Right cardiac atrium (tissue), 5 donors: ENCODE measurements at regions of chr13 and their contacts with region 1.

Region 1: GRCh38 chr13:94228763-94229162 is 250.7 kb downstream of the DCT start:
- DNase-seq: no peak
- ATAC-seq: peak; percentile 16 to 76
- H3K4me3 ChIP-seq: no peak overlapping the region
- H3K27ac ChIP-seq: no peak overlapping the region
- H3K4me1 ChIP-seq: no peaks in the 10 kb centered on the region
- H3K27me3 ChIP-seq: no peaks in the 10 kb centered on the region

Region 2: DNA sequence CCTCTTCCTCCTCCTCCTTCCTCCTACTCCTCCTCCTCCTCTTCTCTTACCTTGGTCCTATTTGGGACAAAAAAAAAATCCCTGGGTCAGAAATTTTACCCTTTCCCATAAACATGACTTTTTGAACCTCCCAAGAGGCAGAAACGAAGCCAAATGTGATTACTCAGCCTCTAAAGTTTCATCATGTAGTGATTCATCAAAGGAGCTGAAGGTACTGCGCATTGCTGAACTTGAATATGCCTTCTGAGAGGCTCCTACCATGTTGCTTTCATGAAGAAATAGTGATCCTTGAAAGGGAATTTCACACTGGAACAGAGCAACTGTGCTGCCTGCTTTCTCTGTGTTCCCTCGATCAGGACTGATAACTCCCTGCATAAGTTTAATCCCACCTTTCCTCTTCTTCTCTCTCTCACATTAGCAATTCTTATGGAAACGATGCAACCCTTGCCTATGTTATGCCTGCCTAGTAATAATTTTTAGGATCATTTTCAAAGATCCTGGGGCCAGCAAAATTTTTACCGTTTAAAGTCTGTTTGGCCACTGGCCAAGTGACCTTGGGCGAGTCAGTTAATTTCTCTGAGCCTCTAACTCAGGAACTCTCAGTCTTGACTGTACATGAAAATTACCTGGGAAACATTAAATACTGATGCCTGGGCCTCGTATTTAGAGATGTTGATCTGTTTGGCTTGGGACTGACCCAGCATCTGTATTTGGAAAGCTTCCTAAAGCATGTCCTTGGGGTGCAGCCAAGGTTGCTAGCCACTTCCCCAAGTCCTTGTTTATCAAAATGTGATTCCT is 101.2 kb after region 1 on chr13:
- intact Hi-C with region 1: loop called in 1 of 4 experiments (anchors 10 kb)
- DNase-seq: no peak
- ATAC-seq: peak; percentile 79 to 82
- H3K4me3 ChIP-seq: no peak overlapping the region
- H3K27ac ChIP-seq: no peak overlapping the region
- H3K4me1 ChIP-seq: peaks cover 4% of the 10 kb centered on the region
- H3K27me3 ChIP-seq: no peaks in the 10 kb centered on the region